ENCODE measurements at regions of chr4 and their contacts with region 1.

Region 1: DNA sequence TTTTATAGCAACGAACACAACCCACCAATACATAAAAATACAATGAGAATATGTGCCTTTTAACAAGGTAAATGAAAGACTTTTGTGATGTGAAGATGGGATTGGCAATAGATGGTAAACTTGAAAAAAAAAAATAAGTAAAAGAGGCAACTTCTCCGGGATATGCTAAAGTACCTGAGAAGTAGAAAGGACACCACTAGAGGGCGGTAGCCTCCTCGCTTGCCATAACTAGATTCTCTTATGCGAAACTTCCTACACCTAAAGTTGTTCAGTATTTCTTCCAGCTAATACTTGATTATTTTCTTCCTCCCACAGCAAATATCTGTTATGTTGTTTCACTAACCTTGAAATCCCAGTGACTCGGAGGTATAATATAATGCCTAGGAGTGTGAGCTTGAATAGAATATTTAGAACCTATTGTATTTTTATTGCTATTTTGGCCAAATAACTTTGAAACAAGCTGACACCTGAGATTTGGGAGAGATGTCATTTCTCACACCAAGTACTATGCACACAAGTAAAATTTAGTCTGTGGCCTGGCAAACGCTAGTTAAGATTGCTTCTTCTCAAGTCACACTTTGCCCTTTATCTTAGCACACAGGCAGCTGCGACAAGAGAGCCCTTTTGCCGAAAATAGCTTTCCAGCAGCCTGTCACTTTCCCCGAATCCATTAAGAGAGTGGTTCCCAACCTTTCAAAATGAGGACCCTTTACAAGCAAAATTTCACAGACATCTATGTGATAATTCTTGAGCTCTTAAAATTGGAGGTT is 44.9 kb upstream of the PDLIM5 start:
- DNase-seq: peak; percentile 88
- ATAC-seq: peak; percentile 85
- H3K4me3 ChIP-seq: no peak overlapping the region
- H3K27ac ChIP-seq: no peak overlapping the region
- H3K4me1 ChIP-seq: peaks cover 2% of the 10 kb centered on the region; the same call in 1 of the 2 replicates
- H3K27me3 ChIP-seq: no peaks in the 10 kb centered on the region
- CTCF ChIP-seq: peak; percentile 93
- POLR2A ChIP-seq: peak; percentile 41; the same call in 1 of the 2 replicates
- RAD21 ChIP-seq: peak; percentile 94

Region 2: DNA sequence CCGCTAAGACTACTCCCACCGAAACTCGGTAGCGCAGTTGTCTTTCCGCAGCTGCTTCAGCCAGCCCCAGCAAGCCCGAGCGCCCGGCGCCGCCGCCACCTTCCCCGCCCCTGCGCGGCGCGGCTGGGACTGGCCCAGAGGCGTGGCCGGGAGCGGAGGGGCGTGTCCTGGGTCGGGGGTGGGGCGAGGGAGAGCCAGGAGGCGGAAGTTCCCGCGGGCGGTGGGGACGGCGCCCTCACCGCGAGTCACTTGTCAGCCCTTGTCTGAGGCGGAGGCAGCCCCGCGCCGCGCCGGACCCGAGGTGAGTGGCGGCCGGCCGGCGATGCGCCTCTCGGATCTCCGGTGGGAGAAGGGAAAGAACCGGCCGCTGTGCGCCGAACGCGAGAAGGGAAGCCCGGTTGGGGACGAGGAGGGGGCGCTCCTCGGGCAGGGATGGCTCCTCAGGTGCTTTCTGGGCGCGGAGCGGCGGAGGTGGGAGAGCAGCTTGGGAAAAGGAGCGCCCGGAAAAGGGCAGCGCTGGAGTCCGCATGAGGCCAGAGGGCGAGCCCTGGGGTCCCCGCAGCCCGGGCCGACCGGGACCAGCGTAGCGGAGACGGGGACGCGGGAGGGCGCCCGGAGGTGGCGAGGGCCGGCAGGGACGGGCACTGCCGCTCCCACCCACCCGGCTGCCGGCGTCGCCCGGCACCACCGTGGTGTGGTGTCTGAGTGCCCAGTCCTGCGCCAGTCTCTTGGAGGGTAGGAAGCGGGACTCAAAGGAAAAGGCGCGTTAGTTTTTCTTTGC is 45.0 kb after region 1 on chr4 and contains the start of gene PDLIM5:
- CTCF ChIA-PET with region 1: interaction called, 6 read pairs
- POLR2A ChIA-PET with region 1: no interaction called
- dilution Hi-C with region 1: no loop called
- in situ Hi-C with region 1: no loop called
- intact Hi-C with region 1: loop called (anchors 2 kb)
- DNase-seq: peak; percentile 84
- ATAC-seq: peak; percentile 92
- H3K4me3 ChIP-seq: peak within 1 kb of the TSS; percentile 99
- H3K27ac ChIP-seq: peak within 1 kb of the TSS; percentile 93
- H3K4me1 ChIP-seq: peaks cover 7% of the 10 kb centered on the region
- H3K27me3 ChIP-seq: no peaks in the 10 kb centered on the region
- CTCF ChIP-seq: no peak
- POLR2A ChIP-seq: peak; percentile 96
- RAD21 ChIP-seq: peak; percentile 8
- total RNA-seq, gene PDLIM5: 159 and 188 TPM in 2 replicates

Region 3: GRCh38 chr4:94577136-94577535 is 170.3 kb after region 1 on chr4:
- CTCF ChIA-PET with region 1: interaction called, 5 read pairs
- POLR2A ChIA-PET with region 1: no interaction called
- dilution Hi-C with region 1: no loop called
- in situ Hi-C with region 1: no loop called
- intact Hi-C with region 1: loop called (anchors 5 kb)
- DNase-seq: peak; percentile 67
- ATAC-seq: peak; percentile 57; the same call in 1 of the 2 replicates
- H3K4me3 ChIP-seq: no peak overlapping the region
- H3K27ac ChIP-seq: no peak overlapping the region
- H3K4me1 ChIP-seq: peaks cover 17% of the 10 kb centered on the region
- H3K27me3 ChIP-seq: no peaks in the 10 kb centered on the region
- CTCF ChIP-seq: no peak
- POLR2A ChIP-seq: no peak
- RAD21 ChIP-seq: no peak

Region 4: DNA sequence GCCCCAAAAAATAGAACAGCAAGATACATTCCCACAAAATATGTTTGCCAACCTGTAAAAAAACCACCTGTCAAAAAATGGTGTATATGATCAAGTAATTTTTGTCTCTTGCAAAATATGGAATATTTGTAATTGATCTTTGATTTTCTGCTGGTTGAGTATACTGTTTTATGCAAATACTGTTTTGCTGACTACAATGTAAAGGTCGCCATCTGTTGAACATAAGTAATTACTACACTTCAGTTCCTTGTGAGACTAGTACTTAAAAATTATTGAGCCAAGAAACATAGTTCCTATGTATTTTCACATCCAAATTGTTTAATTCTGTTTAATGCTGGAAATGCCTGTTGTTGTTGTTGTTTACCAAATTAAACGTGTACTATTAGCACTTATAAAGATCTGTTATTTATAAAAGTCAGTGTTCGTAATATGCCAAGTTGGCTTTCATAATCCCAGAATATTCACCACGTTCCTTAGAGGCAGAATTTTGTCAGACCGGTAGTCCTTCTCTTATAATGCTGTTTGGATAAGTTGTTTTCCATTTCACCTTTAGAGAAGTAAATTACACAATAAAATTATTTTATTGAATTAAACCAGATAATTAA is 189.1 kb after region 1 on chr4:
- CTCF ChIA-PET with region 1: interaction called, 11 read pairs
- POLR2A ChIA-PET with region 1: no interaction called
- dilution Hi-C with region 1: no loop called
- in situ Hi-C with region 1: loop called (anchors 5 kb)
- intact Hi-C with region 1: loop called (anchors 1 kb)
- DNase-seq: peak; percentile 74
- ATAC-seq: peak; percentile 79; the same call in 1 of the 2 replicates
- H3K4me3 ChIP-seq: no peak overlapping the region
- H3K27ac ChIP-seq: no peak overlapping the region
- H3K4me1 ChIP-seq: no peaks in the 10 kb centered on the region
- H3K27me3 ChIP-seq: no peaks in the 10 kb centered on the region
- CTCF ChIP-seq: peak; percentile 74
- POLR2A ChIP-seq: no peak
- RAD21 ChIP-seq: peak; percentile 87

Region 5: DNA sequence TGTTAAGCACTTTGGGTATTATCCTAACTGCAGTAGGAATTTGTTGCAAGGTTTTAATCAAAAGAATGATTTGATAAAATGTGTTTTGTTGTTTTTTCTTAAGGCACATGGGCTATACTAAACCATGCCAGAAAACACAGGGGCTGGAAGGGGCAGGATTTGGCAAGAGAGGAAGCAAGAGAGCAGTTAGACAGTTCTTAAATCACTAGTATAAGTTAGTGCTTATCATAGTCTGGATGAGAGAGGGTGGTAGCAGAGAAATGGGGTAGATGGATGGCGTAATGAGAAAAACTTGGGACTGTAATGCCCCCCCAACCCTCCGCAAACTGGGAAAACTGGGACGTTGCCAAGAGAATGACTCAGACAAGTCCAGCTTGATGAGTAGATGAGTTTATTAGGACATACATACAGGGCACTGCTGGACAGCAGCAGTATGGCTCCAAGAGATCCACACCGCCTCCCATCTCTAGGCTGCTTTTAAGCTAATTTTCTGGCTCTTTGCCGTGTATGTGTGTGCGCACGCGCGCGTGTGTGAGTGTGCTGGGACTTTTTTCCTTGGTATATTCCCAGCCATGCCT is 196.4 kb after region 1 on chr4:
- CTCF ChIA-PET with region 1: interaction called, 11 read pairs
- POLR2A ChIA-PET with region 1: no interaction called
- dilution Hi-C with region 1: no loop called
- in situ Hi-C with region 1: loop called (anchors 5 kb)
- intact Hi-C with region 1: no loop called
- DNase-seq: peak; percentile 96
- ATAC-seq: peak; percentile 95
- H3K4me3 ChIP-seq: no peak overlapping the region
- H3K27ac ChIP-seq: peak overlapping the region; percentile 39; the same call in 1 of the 2 replicates
- H3K4me1 ChIP-seq: peaks cover 4% of the 10 kb centered on the region; the same call in 1 of the 2 replicates
- H3K27me3 ChIP-seq: no peaks in the 10 kb centered on the region
- CTCF ChIP-seq: no peak
- POLR2A ChIP-seq: no peak
- RAD21 ChIP-seq: 0 out of 2 replicates have a peak, but pooled peaks have one; percentile 2

Region 6: GRCh38 chr4:94913316-94913715 is 506.5 kb after region 1 on chr4:
- CTCF ChIA-PET with region 1: no interaction called
- POLR2A ChIA-PET with region 1: no interaction called
- dilution Hi-C with region 1: no loop called
- in situ Hi-C with region 1: no loop called
- intact Hi-C with region 1: no loop called
- DNase-seq: no peak
- ATAC-seq: no peak
- H3K4me3 ChIP-seq: no peak overlapping the region
- H3K27ac ChIP-seq: no peak overlapping the region
- H3K4me1 ChIP-seq: no peaks in the 10 kb centered on the region
- H3K27me3 ChIP-seq: no peaks in the 10 kb centered on the region
- CTCF ChIP-seq: no peak
- POLR2A ChIP-seq: no peak
- RAD21 ChIP-seq: no peak

Region 7: DNA sequence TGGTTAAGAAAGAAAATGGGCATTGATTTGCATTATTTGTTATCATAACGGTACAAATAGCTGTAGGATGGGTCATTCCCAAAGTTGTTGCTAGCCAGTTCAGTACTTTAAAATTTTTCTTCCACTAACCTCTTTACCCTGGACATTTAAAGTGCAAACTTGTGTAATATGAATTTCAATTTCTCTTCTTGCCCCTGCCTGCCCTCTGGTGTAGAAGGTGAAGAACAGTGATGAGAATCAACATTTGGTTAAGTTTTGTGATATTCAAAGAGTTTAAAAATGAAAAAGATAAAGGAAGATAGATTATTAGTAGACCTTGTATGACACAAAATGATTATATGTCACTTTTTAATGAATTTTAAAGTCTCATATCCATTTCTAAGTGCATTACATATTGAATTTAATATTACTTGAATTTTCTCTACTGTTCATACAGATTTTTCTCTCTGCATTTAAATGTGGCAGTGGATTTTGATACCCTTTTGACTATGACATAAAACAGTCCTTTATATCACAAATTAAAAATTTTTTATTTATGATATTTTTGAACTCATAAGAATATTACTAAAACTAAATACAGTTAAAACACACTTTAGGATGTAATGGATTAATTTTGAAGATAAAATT is 688.6 kb after region 1 on chr4:
- CTCF ChIA-PET with region 1: no interaction called
- POLR2A ChIA-PET with region 1: no interaction called
- dilution Hi-C with region 1: no loop called
- in situ Hi-C with region 1: loop called (anchors 25 kb)
- intact Hi-C with region 1: loop called (anchors 10 kb)
- DNase-seq: peak; percentile 59
- ATAC-seq: peak; percentile 82
- H3K4me3 ChIP-seq: no peak overlapping the region
- H3K27ac ChIP-seq: no peak overlapping the region
- H3K4me1 ChIP-seq: no peaks in the 10 kb centered on the region
- H3K27me3 ChIP-seq: no peaks in the 10 kb centered on the region
- CTCF ChIP-seq: peak; percentile 79
- POLR2A ChIP-seq: no peak
- RAD21 ChIP-seq: peak; percentile 84

Region 8: DNA sequence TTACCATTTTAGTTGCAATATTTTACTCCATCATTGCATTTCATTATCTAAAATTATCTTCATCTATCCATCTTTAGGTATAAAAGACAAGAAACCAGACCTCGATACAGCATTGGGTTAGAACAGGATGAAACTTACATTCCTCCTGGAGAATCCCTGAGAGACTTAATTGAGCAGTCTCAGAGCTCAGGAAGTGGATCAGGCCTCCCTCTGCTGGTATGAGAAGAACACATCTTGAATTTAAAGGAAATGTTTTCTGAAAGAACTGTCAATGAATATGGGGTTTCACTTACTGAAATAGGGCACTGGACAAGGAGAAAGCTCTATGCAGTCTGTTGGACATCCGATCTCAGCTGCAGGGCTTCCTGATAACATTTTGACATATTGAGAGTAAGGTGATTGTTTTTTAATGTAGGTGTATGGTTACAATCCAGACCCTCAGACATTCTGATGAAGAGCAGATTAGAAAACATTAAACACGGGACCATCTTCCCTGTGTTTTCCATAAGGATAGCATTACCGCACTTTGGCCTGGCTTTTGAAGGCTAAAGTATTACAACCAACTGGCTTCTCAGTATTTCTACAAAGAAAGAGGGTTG is 718.2 kb after region 1 on chr4:
- CTCF ChIA-PET with region 1: interaction called, 4 read pairs
- POLR2A ChIA-PET with region 1: no interaction called
- dilution Hi-C with region 1: no loop called
- in situ Hi-C with region 1: loop called (anchors 25 kb)
- intact Hi-C with region 1: no loop called
- DNase-seq: peak; percentile 76
- ATAC-seq: peak; percentile 89
- H3K4me3 ChIP-seq: no peak overlapping the region
- H3K27ac ChIP-seq: no peak overlapping the region
- H3K4me1 ChIP-seq: no peaks in the 10 kb centered on the region
- H3K27me3 ChIP-seq: no peaks in the 10 kb centered on the region
- CTCF ChIP-seq: peak; percentile 77
- POLR2A ChIP-seq: no peak
- RAD21 ChIP-seq: peak; percentile 80